ENCODE measurements at regions of chr6 and their contacts with region 1.

Region 1: DNA sequence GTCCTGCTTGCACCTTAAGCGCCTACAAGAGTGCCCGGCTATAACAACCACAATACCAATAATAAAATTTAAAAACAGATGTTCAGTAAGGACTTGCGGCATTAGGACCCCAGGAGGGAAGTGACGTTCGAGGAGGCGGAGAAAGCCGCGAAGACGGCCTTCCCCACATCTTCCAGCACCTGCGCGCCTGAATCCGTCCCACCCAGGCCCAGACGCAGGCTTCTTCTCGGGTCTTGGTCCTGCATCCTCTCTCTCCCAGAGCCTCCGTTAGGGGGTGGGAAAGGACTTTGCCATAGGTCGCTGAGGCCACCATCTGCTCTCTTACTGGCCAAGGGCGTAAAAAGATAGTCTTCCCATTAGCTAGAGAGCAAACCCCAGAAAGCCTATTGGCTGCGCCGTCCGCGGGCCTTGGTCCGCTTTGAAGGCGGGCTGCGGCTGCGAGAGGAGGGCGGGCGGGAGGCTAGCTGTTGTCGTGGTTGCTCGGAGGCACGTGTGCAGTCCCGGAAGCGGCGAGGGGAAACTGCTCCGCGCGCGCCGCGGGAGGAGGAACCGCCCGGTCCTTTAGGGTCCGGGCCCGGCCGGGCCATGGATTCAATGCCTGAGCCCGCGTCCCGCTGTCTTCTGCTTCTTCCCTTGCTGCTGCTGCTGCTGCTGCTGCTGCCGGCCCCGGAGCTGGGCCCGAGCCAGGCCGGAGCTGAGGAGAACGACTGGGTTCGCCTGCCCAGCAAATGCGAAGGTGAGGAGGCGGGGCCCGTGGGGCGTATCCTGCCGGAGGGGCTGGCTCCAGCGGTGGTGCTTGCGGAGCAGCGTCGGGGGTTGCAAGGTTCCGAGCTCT is at the start of gene CNPY3:
- DNase-seq: peak; percentile 84
- ATAC-seq: peak; percentile 74
- H3K4me3 Mint-ChIP-seq: peak within 1 kb of the TSS; percentile 97
- H3K27ac Mint-ChIP-seq: peak within 1 kb of the TSS; percentile 97
- H3K4me1 Mint-ChIP-seq: peaks cover 58% of the 10 kb centered on the region
- H3K27me3 Mint-ChIP-seq: no peaks in the 10 kb centered on the region
- CTCF ChIP-seq: no peak
- total RNA-seq, gene CNPY3: 120 and 121 TPM in 2 replicates

Region 2: GRCh38 chr6:42563697-42564505 is 365.3 kb before region 1 on chr6 and contains the start of gene UBR2:
- CTCF ChIA-PET with region 1: no interaction called
- POLR2A ChIA-PET with region 1: interaction called, 13 read pairs
- intact Hi-C with region 1: no loop called
- DNase-seq: peak; percentile 73
- ATAC-seq: peak; percentile 96
- H3K4me3 Mint-ChIP-seq: peak within 1 kb of the TSS; percentile 92
- H3K27ac Mint-ChIP-seq: peak within 1 kb of the TSS; percentile 92
- H3K4me1 Mint-ChIP-seq: peaks cover 43% of the 10 kb centered on the region
- H3K27me3 Mint-ChIP-seq: no peaks in the 10 kb centered on the region
- CTCF ChIP-seq: no peak
- total RNA-seq, gene UBR2: 34.3 and 40.8 TPM in 2 replicates

Region 3: DNA sequence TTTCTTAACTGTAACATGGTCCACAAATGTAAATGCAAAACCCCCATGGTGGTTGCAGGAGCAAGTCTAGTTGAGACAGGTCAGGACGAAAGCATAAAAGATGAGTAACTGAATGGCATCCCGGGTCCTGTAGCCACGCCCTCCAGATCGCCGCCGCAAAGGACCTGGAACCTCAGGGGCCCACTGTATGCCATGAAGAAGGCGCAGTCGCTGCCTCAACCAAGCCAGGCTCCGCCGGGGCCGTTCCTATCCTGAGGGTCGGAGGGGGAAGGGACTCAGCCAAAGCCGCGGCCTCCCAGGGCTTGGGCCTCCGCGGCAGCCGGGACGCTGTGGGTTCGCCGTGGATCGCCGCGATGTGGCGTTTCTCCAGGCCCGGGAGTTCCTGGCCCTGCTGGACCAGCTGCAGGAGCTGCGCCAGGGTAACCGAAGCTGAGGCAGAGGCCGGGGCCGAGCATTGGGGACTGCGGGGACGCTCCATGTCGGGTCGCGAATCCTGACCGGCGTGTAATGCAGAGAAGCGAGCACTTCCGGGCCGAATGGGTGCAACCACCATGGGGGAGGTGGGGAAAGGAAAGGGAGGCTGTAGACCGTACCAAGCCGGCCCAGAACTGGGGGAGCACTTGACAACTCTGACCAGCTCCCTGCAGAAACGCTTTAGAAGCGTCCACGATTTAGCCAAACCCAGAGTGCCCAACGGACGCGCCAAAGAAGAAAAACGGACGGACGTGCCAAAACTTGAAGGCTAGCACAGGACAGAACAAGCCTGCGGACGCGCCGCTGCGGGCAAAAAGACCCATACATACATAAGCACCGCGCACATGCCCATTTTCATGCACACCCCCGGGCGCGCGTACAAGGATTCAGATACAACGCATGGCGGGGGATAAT is 38.6 kb before region 1 on chr6:
- CTCF ChIA-PET with region 1: no interaction called
- POLR2A ChIA-PET with region 1: interaction called, 21 read pairs
- intact Hi-C with region 1: loop called (anchors 1 kb)
- DNase-seq: peak; percentile 76
- ATAC-seq: peak; percentile 97
- H3K4me3 Mint-ChIP-seq: peak overlapping the region; percentile 97
- H3K27ac Mint-ChIP-seq: peak overlapping the region; percentile 93
- H3K4me1 Mint-ChIP-seq: peaks cover 44% of the 10 kb centered on the region
- H3K27me3 Mint-ChIP-seq: no peaks in the 10 kb centered on the region
- CTCF ChIP-seq: no peak

Region 4: DNA sequence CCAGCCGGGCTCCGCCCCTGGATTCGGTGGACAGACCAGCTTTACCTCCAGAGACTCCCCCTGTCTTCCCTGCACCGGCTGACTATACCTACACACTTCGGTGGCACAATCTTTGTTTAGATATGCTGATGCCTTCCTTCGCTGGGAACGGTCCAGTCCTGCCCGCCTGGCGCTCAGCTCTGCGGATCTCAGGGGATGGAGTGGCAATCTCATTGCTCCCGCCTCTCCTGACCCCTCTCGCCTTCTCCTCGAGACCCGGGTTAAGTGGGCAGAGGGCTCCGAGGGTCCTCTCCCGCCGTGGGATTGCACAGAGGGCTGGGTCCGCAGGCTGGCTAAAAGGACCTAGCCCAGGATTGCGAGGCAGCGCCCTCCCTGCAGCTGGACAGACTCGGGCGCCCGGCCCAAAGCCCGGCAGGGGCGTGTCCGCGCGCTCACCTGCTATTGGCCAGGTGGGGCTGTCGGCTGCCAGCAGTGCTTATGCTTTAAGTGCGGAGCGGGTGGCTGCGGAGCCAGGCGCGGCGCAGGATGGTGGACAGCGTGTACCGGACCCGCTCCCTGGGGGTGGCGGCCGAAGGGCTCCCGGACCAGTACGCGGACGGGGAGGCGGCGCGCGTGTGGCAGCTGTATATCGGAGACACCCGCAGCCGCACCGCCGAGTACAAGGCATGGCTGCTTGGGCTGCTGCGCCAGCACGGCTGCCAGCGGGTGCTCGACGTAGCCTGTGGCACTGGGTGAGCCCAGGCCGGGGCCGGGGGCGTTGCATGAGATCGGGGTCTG is 31.2 kb after region 1 on chr6 and contains the start of gene GNMT:
- CTCF ChIA-PET with region 1: no interaction called
- POLR2A ChIA-PET with region 1: interaction called, 18 read pairs
- intact Hi-C with region 1: no loop called
- DNase-seq: peak; percentile 47
- ATAC-seq: peak; percentile 83
- H3K4me3 Mint-ChIP-seq: peak within 1 kb of the TSS; percentile 70
- H3K27ac Mint-ChIP-seq: peak within 1 kb of the TSS; percentile 7
- H3K4me1 Mint-ChIP-seq: peaks cover 14% of the 10 kb centered on the region
- H3K27me3 Mint-ChIP-seq: no peaks in the 10 kb centered on the region
- CTCF ChIP-seq: no peak
- total RNA-seq, gene GNMT: 1.7 and 2.3 TPM in 2 replicates

Region 5: DNA sequence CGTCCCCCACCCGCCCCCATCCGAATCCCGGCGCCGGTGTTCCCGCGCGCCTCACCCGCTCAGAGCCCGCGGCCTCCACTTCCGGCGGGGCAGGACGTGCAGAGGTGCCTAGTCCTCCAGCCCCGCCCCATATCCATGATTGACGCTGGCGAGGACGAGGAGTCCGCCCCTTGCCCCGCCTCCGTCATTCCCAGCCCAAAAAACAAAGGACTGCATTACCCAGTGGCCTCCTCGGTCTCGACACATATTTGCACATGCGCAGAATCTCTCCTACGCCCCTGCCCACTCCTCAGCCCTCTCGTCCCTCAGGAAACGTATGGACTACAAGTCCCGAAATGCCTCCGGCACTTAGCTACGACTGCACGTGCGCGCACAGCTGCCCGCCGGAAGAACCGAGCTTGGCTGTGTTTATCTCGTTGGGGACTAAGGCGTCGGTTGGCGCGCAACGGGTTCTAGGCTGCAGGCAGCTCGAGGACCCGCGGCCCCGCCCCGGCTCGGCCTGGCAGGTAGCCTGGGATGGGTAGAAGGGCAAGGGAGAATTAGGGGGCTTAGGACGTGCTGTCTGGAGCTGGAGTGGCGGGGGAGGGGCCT is 84.7 kb after region 1 on chr6 and contains the starts of genes KLHDC3 and MEA1:
- CTCF ChIA-PET with region 1: no interaction called
- POLR2A ChIA-PET with region 1: interaction called, 58 read pairs
- intact Hi-C with region 1: loop called (anchors 1 kb)
- DNase-seq: peak; percentile 94
- ATAC-seq: peak; percentile 93
- H3K4me3 Mint-ChIP-seq: peak within 1 kb of the TSS; percentile 97
- H3K27ac Mint-ChIP-seq: peak within 1 kb of the TSS; percentile 89
- H3K4me1 Mint-ChIP-seq: peaks cover 51% of the 10 kb centered on the region
- H3K27me3 Mint-ChIP-seq: no peaks in the 10 kb centered on the region
- CTCF ChIP-seq: no peak
- total RNA-seq, gene KLHDC3: 36.4 and 36.7 TPM in 2 replicates
- total RNA-seq, gene MEA1: 44.4 and 48.3 TPM in 2 replicates

Region 6: GRCh38 chr6:43059168-43060033 is 130.2 kb after region 1 on chr6 and contains the starts of genes KLC4 and MRPL2:
- CTCF ChIA-PET with region 1: no interaction called
- POLR2A ChIA-PET with region 1: interaction called, 43 read pairs
- intact Hi-C with region 1: loop called (anchors 1 kb)
- DNase-seq: peak; percentile 94
- ATAC-seq: peak; percentile 97
- H3K4me3 Mint-ChIP-seq: peak within 1 kb of the TSS; percentile 95
- H3K27ac Mint-ChIP-seq: peak within 1 kb of the TSS; percentile 97
- H3K4me1 Mint-ChIP-seq: peaks cover 38% of the 10 kb centered on the region
- H3K27me3 Mint-ChIP-seq: no peaks in the 10 kb centered on the region
- CTCF ChIP-seq: no peak
- total RNA-seq, gene KLC4: 17.0 and 19.8 TPM in 2 replicates
- total RNA-seq, gene MRPL2: 43.9 and 47.8 TPM in 2 replicates

Region 7: DNA sequence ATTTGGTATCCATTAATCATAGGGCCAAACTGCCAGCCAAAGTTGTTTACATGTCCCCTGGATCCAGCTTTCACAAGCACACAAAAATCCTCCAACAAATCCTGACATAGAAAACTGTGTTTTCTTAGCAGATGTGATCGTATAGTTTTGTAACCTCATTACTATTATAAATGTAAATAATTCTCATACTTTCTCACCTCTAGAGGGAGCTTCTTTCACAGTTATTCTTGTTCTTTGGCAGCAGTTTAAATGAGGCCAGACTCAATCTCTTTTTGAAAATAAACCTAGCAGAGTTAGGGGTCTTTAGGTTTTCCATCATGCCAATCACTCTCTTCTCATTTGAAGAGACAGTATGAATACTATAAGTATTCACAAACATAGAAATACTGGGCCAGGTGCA is 457.3 kb after region 1 on chr6:
- CTCF ChIA-PET with region 1: no interaction called
- POLR2A ChIA-PET with region 1: interaction called, 8 read pairs
- intact Hi-C with region 1: loop called (anchors 1 kb)
- DNase-seq: no peak
- ATAC-seq: no peak
- H3K4me3 Mint-ChIP-seq: peak overlapping the region; percentile 15
- H3K27ac Mint-ChIP-seq: peak overlapping the region; percentile 98
- H3K4me1 Mint-ChIP-seq: peaks cover 65% of the 10 kb centered on the region
- H3K27me3 Mint-ChIP-seq: peaks cover 18% of the 10 kb centered on the region
- CTCF ChIP-seq: no peak

Measured in activated B cell treated with CpG ODN at 0.5 μM for 24 hours (primary cell).